WTC11 (cell line): ENCODE measurements at regions of chr15 and their contacts with region 1.

Region 1: DNA sequence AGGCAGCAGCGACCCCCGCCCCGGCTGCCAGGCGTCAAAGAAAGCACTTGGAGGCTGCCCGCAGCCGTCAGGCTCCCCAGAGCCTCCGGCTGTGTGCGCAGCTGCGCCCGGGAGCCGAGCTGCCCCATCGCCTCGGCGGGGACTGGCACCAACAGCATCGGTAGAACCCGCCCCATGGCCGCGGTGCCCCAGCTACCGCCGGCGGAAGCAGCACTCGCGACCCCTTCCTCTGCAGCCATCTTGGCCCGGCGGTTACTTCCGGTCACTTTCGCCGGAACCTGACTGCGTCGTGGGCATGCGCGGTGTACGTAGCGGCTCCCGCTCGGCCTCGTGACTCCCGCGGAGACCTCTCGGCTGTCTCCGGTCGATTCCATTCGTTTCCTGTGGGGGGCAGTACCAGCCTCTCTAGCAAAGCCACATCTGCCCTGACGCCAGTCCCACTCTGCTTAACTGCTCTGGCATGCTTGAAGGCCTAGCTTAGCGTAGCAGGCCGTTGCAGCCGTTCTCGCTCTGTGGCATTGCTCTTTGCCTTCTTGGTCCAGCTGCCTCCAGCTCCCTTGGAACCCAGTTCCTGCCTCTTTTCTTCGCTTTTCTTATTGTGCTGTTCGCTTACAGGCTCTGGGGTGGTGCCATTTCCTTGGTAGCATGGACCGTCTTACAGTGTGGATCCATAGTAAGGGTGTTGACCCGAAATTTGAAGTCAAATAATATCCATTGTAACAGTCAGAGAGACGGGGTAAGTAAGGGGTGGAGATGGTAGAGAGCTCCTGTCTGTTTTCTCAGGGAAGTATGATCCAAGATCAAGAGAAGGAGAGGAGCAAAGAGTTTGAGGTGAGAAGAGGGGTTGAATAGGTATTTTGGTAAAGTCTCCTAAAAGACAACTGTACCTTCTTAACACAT is at the start of gene SPG11:
- DNase-seq: peak; percentile 99
- ATAC-seq: peak; percentile 94
- H3K4me3 Mint-ChIP-seq: peak within 1 kb of the TSS; percentile 98
- H3K27ac Mint-ChIP-seq: peak within 1 kb of the TSS; percentile 76
- H3K4me1 Mint-ChIP-seq: peaks cover 16% of the 10 kb centered on the region
- H3K27me3 Mint-ChIP-seq: no peaks in the 10 kb centered on the region
- CTCF ChIP-seq: peak; percentile 82
- total RNA-seq, gene SPG11: 46.4 to 54.3 TPM (median 50.7 TPM) in 3 replicates

Region 2: DNA sequence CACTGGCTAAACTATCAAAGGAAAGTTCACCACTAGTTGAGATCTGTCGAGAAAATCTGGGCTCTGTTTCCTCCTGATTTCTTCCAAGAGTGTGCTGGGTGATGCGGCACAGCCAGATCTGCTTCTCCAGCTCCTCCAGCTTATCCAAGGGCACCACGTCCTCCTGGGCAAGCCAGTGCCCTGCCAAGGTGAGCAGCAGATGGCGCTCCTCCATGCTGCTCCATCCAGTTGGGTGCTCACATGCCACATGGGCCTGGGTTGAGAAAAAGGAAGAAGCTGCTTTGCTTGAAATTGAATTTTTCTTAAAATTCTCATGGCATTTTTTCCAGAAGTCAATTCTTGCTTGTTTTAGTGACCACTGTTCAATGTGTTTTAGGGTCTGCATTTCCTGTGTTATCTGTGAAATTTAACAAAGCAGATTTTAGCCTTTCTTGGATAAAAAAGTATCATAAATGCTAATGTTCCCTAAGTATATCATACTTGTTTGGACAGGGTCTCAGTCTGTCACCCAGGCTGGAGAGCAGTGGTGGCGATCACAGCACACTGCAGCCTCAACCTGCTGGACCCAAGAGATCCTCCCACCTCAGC is 79.4 kb before region 1 on chr15:
- CTCF ChIA-PET with region 1: interaction called, 16 read pairs
- POLR2A ChIA-PET with region 1: interaction called, 3 read pairs
- DNase-seq: peak; percentile 67
- ATAC-seq: peak; percentile 98
- H3K4me3 Mint-ChIP-seq: no peak overlapping the region
- H3K27ac Mint-ChIP-seq: no peak overlapping the region
- H3K4me1 Mint-ChIP-seq: no peaks in the 10 kb centered on the region
- H3K27me3 Mint-ChIP-seq: no peaks in the 10 kb centered on the region
- CTCF ChIP-seq: 0 out of 2 replicates have a peak, but pooled peaks have one; percentile 27

Region 3: DNA sequence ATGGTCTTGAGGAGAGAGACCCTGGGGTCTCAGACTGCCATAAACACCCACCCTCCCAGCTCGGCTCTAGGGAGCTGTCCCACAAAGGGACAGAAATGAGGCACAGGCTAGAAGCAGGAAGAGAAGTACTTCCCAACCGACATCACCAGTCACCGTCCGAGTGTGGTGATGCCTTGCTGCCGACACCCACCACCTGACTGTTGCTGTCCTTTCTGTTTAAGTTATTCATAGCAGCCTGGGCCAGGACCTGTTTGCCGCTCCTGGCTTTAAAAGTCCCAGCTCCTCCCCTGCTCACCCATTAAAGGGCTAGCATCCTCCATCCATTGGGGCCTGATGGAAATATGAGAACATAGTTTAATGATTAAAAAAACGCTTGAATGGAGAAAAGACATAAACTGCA is 13.0 kb after region 1 on chr15:
- CTCF ChIA-PET with region 1: interaction called, 36 read pairs
- POLR2A ChIA-PET with region 1: no interaction called
- DNase-seq: no peak
- ATAC-seq: peak; percentile 30
- H3K4me3 Mint-ChIP-seq: no peak overlapping the region
- H3K27ac Mint-ChIP-seq: no peak overlapping the region
- H3K4me1 Mint-ChIP-seq: peaks cover 4% of the 10 kb centered on the region
- H3K27me3 Mint-ChIP-seq: peaks cover 9% of the 10 kb centered on the region
- CTCF ChIP-seq: no peak

Region 4: GRCh38 chr15:44682211-44682610 is 18.6 kb after region 1 on chr15:
- CTCF ChIA-PET with region 1: interaction called, 36 read pairs
- POLR2A ChIA-PET with region 1: interaction called, 5 read pairs
- DNase-seq: no peak
- ATAC-seq: no peak
- H3K4me3 Mint-ChIP-seq: no peak overlapping the region
- H3K27ac Mint-ChIP-seq: no peak overlapping the region
- H3K4me1 Mint-ChIP-seq: peaks cover 30% of the 10 kb centered on the region
- H3K27me3 Mint-ChIP-seq: peaks cover 5% of the 10 kb centered on the region
- CTCF ChIP-seq: no peak

Region 5: DNA sequence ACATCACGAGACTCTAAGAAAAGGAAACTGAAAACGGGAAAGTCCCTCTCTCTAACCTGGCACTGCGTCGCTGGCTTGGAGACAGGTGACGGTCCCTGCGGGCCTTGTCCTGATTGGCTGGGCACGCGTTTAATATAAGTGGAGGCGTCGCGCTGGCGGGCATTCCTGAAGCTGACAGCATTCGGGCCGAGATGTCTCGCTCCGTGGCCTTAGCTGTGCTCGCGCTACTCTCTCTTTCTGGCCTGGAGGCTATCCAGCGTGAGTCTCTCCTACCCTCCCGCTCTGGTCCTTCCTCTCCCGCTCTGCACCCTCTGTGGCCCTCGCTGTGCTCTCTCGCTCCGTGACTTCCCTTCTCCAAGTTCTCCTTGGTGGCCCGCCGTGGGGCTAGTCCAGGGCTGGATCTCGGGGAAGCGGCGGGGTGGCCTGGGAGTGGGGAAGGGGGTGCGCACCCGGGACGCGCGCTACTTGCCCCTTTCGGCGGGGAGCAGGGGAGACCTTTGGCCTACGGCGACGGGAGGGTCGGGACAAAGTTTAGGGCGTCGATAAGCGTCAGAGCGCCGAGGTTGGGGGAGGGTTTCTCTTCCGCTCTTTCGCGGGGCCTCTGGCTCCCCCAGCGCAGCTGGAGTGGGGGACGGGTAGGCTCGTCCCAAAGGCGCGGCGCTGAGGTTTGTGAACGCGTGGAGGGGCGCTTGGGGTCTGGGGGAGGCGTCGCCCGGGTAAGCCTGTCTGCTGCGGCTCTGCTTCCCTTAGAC is 47.9 kb after region 1 on chr15 and contains the start of gene B2M:
- CTCF ChIA-PET with region 1: interaction called, 92 read pairs
- POLR2A ChIA-PET with region 1: interaction called, 20 read pairs
- DNase-seq: peak; percentile 94
- ATAC-seq: peak; percentile 95
- H3K4me3 Mint-ChIP-seq: peak within 1 kb of the TSS; percentile 94
- H3K27ac Mint-ChIP-seq: peak within 1 kb of the TSS; percentile 96
- H3K4me1 Mint-ChIP-seq: peaks cover 13% of the 10 kb centered on the region
- H3K27me3 Mint-ChIP-seq: peaks cover 15% of the 10 kb centered on the region
- CTCF ChIP-seq: no peak
- total RNA-seq, gene B2M: 88.2 to 105 TPM (median 102 TPM) in 3 replicates

Region 6: GRCh38 chr15:44728576-44729407 is 65.1 kb after region 1 on chr15:
- CTCF ChIA-PET with region 1: interaction called, 104 read pairs
- POLR2A ChIA-PET with region 1: interaction called, 11 read pairs
- DNase-seq: peak; percentile 88
- ATAC-seq: peak; percentile 94
- H3K4me3 Mint-ChIP-seq: peak overlapping the region; percentile 97
- H3K27ac Mint-ChIP-seq: peak overlapping the region; percentile 99
- H3K4me1 Mint-ChIP-seq: peaks cover 32% of the 10 kb centered on the region
- H3K27me3 Mint-ChIP-seq: no peaks in the 10 kb centered on the region; the same call in 1 of the 2 replicates
- CTCF ChIP-seq: no peak

Region 7: DNA sequence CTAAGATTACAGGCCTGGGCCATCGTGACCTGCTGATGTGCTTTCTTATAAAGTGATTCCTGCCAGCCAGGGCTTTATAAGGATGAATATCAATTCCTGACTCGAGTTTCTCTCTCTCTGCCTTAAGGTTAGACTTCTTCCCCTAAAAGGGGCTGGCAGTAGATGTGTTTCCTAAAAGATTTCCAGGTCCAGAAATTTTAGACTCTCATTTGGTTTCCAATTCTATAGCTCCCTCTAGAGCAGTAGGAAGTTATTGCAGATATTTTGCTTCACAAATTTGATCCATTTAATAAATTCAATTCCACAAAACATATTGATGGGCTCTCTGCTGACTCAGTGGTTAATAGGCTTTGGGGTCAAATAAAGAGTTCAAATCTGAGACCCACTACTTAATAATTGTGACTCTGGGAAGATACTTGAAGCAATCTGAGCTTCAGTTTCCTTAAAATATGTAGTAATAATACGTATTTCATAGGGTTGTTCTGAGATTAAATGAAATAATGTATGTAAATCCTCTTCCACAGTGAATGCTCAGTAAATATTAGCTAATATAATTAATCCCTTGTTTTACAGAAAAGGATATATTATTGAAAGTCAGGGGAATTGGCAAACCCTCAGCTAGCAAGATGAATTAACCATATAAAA is 74.8 kb after region 1 on chr15:
- CTCF ChIA-PET with region 1: interaction called, 104 read pairs
- POLR2A ChIA-PET with region 1: interaction called, 6 read pairs
- DNase-seq: no peak
- ATAC-seq: no peak
- H3K4me3 Mint-ChIP-seq: no peak overlapping the region
- H3K27ac Mint-ChIP-seq: no peak overlapping the region
- H3K4me1 Mint-ChIP-seq: peaks cover 8% of the 10 kb centered on the region
- H3K27me3 Mint-ChIP-seq: peaks cover 14% of the 10 kb centered on the region
- CTCF ChIP-seq: no peak